ENCODE measurements at regions of chr3 and their contacts with region 1.

Region 1: DNA sequence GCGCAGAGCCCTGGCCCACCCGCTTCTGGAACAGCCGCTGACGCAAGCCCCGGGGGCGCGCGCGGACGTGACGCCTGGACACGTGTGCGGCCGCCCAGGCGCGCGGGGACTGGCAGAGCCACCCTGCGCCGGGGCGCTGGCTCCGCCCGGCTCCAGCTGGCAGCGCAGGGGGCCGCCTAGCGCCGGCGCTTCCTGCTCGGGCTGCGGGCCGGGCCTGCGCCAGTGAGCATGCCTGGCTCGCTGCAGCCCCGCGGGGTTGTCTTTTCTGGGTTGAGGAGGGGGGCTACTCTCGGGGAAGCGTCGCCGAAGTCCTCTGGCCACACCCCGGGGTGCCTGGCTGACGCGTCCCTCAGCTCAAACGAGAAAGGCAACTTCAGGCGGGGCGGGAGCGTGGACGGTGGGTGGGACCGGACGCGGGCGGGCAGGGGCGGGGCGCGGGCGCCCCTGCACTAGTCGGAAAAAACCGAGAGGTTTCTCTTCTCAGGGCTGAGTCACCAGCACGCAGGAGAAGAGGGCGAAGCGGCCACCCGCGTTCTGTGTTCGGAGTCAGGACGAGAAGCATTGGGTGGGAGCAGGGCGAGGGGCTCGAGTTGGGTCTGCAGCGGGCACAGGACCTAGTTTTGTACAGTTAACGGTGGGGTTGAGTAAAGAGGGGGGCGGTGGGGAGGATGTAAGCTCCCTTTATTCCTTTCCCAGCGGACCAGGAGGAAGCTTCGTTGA is at the start of gene SIAH2:
- DNase-seq: peak; percentile 90
- H3K4me3 Mint-ChIP-seq: peak within 1 kb of the TSS; percentile 99
- H3K27ac Mint-ChIP-seq: peak within 1 kb of the TSS; percentile 100
- H3K4me1 Mint-ChIP-seq: peaks cover 64% of the 10 kb centered on the region
- H3K27me3 Mint-ChIP-seq: no peaks in the 10 kb centered on the region
- total RNA-seq, gene SIAH2: 175 and 177 TPM in 2 replicates

Region 2: DNA sequence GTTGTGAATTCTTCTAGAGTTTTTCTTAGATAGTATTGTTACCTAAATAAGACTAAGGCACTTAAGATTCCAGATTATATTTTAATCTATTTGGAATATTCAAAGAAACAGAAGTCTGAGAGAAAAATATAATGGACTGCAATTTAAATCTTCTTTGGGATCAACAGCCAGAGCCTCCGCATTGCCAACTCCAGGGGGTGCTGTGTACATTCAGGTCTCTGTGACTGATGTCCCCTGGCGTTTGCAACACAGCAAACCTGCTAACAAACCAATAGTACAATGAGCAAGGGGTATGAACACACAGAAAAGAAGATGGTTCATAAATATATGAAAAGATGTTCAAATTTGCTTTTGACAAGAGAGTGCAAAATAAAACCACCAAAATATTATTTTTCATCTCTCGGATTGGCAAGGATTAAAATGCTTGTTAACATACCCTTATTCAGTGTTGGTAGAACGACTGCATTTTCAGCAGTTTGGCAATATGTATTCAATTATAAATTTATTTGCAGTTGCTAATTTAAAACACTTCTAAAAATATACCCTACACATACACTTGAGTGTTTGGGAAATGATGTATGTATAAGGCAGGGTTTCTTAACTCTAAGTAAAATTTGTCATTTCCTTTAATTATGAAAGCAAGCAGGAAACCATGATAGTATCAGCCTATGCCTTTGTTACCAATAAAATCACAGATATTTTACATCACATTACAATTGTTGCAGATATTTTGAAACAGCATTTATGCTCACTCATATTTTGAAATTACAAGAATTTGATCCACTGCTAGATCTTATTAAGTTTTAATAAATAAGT is 1369.7 kb before region 1 on chr3:
- intact Hi-C with region 1: no loop called
- DNase-seq: peak; percentile 12
- H3K4me3 Mint-ChIP-seq: no peak overlapping the region
- H3K27ac Mint-ChIP-seq: no peak overlapping the region
- H3K4me1 Mint-ChIP-seq: no peaks in the 10 kb centered on the region
- H3K27me3 Mint-ChIP-seq: peaks cover 10% of the 10 kb centered on the region

Region 3: DNA sequence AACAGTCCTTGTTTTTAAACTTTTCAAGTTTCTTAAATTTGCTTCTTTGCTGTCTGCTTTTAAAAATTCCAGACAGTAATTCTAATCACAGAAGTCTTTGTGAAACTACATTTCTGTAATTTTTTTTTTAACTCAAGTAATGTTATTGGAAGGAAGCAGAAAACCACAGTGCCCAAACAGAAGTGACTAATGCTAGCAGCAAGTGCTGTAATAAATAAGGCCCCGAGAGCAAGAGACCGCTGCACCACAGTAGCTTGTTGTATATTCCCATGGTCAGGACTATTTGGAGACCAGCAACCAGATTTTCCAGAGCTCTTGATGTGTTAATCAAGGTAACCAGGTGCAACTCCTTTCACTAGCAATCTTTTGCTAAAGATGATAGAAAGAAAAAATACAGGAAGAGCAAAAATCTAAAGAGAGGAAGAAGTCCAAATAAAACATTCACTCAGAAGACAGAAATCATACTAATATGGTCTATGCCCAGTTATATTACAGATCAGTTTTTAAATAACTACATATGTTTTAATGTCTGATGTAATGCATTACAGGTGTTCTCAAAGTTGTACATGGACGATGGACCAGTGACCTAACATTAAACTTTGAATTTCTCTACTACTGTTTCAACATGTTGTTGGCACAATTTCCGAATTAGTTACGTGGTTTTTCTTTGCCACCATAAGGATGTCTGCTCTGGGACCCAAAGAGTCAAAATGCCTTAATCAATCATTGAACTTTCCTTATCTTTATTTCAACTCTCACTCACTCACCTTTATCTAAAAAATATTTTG is 1141.9 kb before region 1 on chr3:
- intact Hi-C with region 1: loop called (anchors 5 kb)
- DNase-seq: no peak
- H3K4me3 Mint-ChIP-seq: no peak overlapping the region
- H3K27ac Mint-ChIP-seq: peak overlapping the region; percentile 2
- H3K4me1 Mint-ChIP-seq: peaks cover 31% of the 10 kb centered on the region
- H3K27me3 Mint-ChIP-seq: peaks cover 10% of the 10 kb centered on the region

Region 4: GRCh38 chr3:150194513-150194912 is 568.8 kb before region 1 on chr3:
- intact Hi-C with region 1: no loop called
- DNase-seq: no peak
- H3K4me3 Mint-ChIP-seq: no peak overlapping the region
- H3K27ac Mint-ChIP-seq: no peak overlapping the region
- H3K4me1 Mint-ChIP-seq: no peaks in the 10 kb centered on the region
- H3K27me3 Mint-ChIP-seq: peaks cover 14% of the 10 kb centered on the region

Region 5: DNA sequence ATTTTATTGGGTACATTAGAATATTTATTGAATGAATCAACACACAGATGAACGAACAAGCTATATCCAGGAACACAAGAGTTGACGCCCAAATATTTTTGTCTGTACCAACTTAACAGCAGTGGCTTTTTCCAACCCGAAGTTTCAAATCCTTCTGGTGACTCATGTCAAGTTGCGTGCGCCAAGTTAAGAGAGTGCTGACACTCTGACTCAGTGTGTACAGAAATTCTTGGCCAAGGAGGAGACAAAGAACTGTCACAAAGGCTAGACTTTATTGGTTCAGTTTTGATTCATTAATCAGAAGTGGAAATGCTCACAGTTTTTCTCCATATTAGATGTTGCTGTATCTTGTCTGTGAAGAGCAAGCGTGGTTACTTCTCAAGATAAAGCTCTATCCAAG is 414.8 kb before region 1 on chr3:
- intact Hi-C with region 1: no loop called
- DNase-seq: no peak
- H3K4me3 Mint-ChIP-seq: no peak overlapping the region
- H3K27ac Mint-ChIP-seq: no peak overlapping the region
- H3K4me1 Mint-ChIP-seq: no peaks in the 10 kb centered on the region
- H3K27me3 Mint-ChIP-seq: peaks cover 9% of the 10 kb centered on the region

Region 6: DNA sequence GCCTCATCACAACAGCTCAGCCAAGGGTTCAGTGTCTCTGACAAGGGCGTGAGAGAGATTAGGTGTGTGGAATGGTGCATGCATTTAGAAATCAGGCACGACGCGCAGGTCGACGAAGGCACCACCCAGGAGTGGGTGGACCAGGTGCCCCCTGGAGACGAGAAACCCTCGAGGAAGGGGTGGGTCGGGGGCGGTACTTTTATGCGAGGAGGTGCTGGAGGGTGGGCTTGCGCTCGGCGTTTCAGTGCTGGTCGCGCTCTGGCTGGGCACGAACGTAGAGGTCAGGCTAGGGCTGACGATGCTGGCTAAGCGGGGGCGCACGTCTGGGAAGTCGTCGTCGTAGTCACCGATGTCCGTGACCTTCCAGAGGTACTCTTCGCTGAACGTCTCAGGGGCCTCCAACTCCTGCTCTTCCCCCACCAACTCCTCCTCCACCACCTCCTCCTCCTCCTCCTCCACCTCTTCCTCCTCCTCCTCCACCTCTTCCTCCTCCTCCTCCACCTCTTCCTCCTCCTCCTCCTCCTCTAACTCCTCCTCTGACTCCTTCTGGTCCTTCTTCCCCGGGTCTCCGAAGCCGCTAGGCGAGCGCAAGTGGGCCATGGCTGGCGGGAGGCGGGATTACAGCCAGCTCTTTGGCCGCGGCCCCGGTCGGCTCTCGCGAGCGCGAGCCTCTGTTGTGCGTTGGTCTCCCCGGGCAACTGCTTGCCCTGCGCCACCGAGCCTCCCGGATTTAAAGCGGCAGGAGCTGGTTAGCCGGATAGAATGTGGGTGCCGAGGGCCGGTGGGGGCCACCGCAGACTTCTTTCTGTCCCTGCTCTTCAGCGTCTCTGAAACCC is 59.8 kb before region 1 on chr3 and contains the start of gene ERICH6:
- intact Hi-C with region 1: loop called (anchors 1 kb)
- DNase-seq: peak; percentile 81
- H3K4me3 Mint-ChIP-seq: peak within 1 kb of the TSS; percentile 93
- H3K27ac Mint-ChIP-seq: peak within 1 kb of the TSS; percentile 99
- H3K4me1 Mint-ChIP-seq: peaks cover 23% of the 10 kb centered on the region
- H3K27me3 Mint-ChIP-seq: no peaks in the 10 kb centered on the region
- total RNA-seq, gene ERICH6: not detected in 2 replicates

Region 7: DNA sequence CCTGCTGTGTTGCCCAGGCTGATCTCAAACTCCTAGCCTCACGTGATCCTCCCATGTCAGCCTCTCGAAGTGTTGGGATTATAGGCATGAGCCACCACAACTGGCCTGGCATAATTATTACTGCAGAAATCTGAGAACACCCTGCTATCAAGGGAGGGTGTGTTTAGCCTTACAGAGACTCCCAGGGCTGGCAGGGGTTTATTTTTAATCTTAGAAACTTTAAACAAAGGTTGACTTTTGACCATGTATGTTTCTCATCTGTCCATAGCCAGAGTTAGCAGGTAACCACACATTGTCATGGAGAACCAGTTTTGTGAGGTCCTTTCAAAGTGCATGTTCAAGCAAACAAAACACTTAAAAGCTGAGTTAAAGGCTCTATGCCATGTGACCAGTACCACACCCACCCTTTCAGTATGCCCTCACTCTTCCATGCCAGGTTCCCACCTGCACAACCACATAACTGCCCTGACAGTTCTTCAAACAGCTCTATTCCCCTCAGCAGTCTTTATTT is 11.5 kb before region 1 on chr3:
- intact Hi-C with region 1: loop called (anchors 1 kb)
- DNase-seq: no peak
- H3K4me3 Mint-ChIP-seq: peak overlapping the region; percentile 11
- H3K27ac Mint-ChIP-seq: peak overlapping the region; percentile 83
- H3K4me1 Mint-ChIP-seq: peaks cover 86% of the 10 kb centered on the region
- H3K27me3 Mint-ChIP-seq: no peaks in the 10 kb centered on the region

Region 8: DNA sequence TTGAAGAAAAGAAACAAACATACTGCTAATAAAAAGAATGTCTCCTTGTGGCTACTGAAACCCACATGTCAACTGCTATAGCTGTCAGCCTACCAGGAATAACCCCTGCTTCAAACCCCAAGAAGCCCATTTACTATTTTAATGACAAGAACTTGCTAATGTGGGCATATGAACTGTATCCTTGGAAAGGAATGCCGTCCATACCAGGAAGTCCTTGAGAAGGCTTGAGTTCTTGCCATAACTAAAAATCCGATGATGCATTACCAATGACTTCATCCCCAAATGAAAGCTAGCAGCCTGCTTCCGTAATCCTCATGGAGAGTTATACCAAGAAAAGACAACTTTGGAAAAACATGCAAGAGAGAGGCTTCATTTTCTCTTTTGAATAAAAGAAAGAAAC is 107.1 kb after region 1 on chr3:
- intact Hi-C with region 1: loop called (anchors 1 kb)
- DNase-seq: no peak
- H3K4me3 Mint-ChIP-seq: no peak overlapping the region
- H3K27ac Mint-ChIP-seq: no peak overlapping the region
- H3K4me1 Mint-ChIP-seq: peaks cover 2% of the 10 kb centered on the region
- H3K27me3 Mint-ChIP-seq: peaks cover 12% of the 10 kb centered on the region

Region 9: DNA sequence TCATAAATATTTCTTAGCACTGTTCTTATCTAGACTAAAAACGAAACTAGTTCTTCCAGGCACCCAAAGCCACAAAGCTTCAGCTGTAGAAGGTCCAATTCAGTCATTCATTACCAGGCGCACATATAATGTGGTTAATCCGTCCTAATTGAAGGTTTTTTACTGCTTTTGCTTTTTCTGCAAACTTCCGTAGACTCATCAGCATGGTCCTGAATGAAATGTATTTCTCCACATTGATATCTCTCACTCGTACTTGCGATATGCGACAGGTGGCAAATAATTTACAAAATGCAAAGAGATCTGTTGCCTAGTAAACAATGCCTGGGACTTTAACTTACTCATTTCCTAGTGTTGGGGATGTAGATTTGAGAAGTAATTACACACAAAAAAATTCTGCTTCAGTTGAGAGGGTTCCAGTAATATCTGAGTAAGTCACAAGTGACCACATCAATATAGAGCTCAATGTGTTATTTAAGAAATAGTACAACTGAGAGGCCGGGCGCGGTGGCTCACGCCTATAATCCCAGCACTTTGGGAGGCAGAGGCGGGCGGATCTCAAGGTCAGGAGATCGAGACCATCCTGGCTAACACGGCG is 1430.5 kb after region 1 on chr3:
- intact Hi-C with region 1: loop called (anchors 10 kb)
- DNase-seq: no peak
- H3K4me3 Mint-ChIP-seq: peak overlapping the region; percentile 71
- H3K27ac Mint-ChIP-seq: peak overlapping the region; percentile 87
- H3K4me1 Mint-ChIP-seq: peaks cover 87% of the 10 kb centered on the region
- H3K27me3 Mint-ChIP-seq: no peaks in the 10 kb centered on the region

Measured in activated T-helper 1 cell treated with anti-CD3 and anti-CD28 coated beads, Interleukin-12 subunit alpha, Interleukin-12 subunit beta, Interleukin-2, Interleukin-4 antibody, amounts not matched to agents 30 ng/mL and 10 ng/mL and 1 ng/mL, durations not matched to agents 14 hours and 24 hours and 36 hours (primary cell).